Heart left ventricle (tissue), 16 donors: ENCODE measurements at regions of chr2 and their contacts with region 1.

Region 1: DNA sequence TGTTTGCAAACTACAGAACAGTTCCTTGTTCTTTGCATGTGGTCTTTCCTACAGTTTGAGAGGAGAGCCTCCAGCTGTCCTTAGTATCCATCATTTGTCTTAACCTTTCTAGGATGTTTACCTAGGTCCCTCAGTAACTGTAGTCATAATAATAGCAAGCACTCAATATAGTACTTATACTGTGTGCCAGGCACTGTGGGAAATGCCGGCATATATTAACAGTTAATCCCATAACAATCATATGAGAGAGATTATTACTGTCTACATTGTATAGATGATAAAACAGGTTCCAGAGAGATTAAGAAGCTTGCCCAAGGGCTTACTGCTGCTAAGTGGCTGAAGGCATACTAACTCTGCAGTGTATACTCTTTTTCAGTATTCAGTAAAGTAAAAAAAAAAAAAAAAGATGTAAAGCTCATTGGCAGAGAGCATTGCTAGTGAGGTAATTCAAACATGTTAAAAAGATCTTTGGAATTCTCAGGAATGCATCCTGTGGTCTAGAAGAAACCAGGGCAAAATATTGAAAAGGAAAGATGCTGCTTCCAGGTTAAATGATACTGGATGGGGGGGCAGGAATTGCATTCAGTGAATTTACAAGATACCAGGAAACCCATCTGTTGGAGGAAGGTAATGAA is 72.3 kb downstream of the SPTBN1 start:
- DNase-seq: no peak
- ATAC-seq: peak in 1 of 4 donors; percentile 21
- H3K4me3 ChIP-seq: no peak overlapping the region
- H3K27ac ChIP-seq: peak overlapping the region in 7 of 12 donors; percentile 8 to 82 (median 28)
- H3K4me1 ChIP-seq: peaks cover 5 to 90% (median 68%) of the 10 kb centered on the region in 12 donors
- H3K27me3 ChIP-seq: no peaks in the 10 kb centered on the region
- CTCF ChIP-seq: no peak
- POLR2A ChIP-seq: no peak

Region 2: GRCh38 chr2:54618646-54619565 is 90.5 kb after region 1 on chr2:
- intact Hi-C with region 1: loop called in 1 of 10 experiments (anchors 5 kb)
- DNase-seq: peak in 1 of 5 donors; percentile 40
- ATAC-seq: peak in 3 of 4 donors; percentile 5 to 43 (median 36)
- H3K4me3 ChIP-seq: no peak overlapping the region
- H3K27ac ChIP-seq: peak overlapping the region; percentile 39 to 78 (median 70)
- H3K4me1 ChIP-seq: peaks cover 18 to 77% (median 70%) of the 10 kb centered on the region in 12 donors
- H3K27me3 ChIP-seq: no peaks in the 10 kb centered on the region
- CTCF ChIP-seq: no peak
- POLR2A ChIP-seq: no peak